ENCODE measurements at regions of chr9 and their contacts with region 1.

Region 1: DNA sequence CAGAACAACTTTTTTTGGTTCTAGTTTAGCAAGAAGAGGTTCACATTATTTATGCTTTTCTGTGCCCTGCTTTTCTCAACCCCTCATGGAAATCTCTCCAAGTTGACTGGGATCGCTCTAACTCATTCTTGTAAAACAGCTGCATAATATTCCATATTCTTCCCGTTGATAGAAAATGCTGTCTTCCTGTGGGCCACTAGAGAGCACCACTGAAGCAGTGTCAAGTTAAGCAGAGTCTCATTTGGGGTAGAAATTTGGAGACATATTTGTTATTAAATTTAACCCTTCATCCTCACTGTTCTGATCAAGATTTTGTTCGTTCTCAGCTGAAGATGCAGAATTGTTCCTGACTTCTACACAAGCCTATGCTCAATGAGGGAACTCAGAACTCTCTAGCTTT is 140.1 kb downstream of the CEMIP2 start:
- DNase-seq: peak in 1 of 4 experiments; percentile 45
- ATAC-seq: peak; percentile 84
- H3K4me3 ChIP-seq: no peak overlapping the region
- H3K27ac ChIP-seq: no peak overlapping the region
- H3K4me1 ChIP-seq: peaks cover 0 to 27% of the 10 kb centered on the region in 2 experiments; a peak in 3 of 5 replicates
- H3K27me3 ChIP-seq: no peaks in the 10 kb centered on the region
- CTCF ChIP-seq: peak; percentile 61 to 67 (median 63)
- EP300 ChIP-seq: no peak
- POLR2A ChIP-seq: no peak
- RAD21 ChIP-seq: peak; percentile 73 to 86

Region 2: GRCh38 chr9:71562140-71562539 is 66.1 kb before region 1 on chr9:
- CTCF ChIA-PET with region 1: no interaction called
- POLR2A ChIA-PET with region 1: no interaction called
- in situ Hi-C with region 1: no loop called
- intact Hi-C with region 1: no loop called
- DNase-seq: no peak
- ATAC-seq: no peak
- H3K4me3 ChIP-seq: no peak overlapping the region
- H3K27ac ChIP-seq: no peak overlapping the region
- H3K4me1 ChIP-seq: no peaks in the 10 kb centered on the region
- H3K27me3 ChIP-seq: peaks cover 0 to 4% of the 10 kb centered on the region in 2 experiments; a peak in 1 of 5 replicates
- CTCF ChIP-seq: no peak
- EP300 ChIP-seq: no peak
- POLR2A ChIP-seq: no peak
- RAD21 ChIP-seq: no peak

Region 3: DNA sequence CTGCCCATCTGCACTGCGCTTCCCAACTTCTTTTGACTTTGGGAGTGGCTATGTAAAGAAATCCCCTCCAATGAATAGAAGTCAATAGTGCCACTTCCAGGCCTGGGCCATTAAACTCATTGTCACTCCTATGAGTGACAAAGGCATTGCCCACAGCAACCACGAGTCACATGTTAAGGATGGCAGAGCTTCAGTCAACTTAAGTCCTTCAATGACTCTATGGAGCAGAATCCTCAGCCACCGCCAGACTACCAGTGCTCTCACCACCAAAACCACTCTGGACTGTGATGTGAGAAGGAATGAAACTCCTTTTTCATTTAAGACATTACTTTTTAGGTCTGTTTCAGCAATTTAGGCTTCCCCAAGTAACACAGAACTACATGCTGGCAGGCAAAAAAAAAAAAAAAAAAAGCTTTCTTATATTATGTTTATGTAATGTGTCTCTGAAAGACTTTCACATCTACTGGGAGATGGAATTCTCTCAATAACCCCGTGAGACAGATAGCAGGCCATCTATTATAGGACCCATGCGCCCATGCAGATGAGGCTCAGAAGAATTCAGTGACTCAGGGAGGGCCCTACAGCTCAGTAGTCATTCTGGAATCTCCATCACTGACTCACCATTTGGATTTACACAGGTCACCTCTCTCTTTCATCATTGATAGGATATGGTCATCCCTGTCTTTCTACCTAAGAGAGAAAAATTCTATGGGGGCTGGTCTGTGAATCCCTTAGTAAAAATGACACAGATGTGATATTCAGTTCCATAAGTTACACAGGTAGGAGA is 40.5 kb before region 1 on chr9:
- CTCF ChIA-PET with region 1: no interaction called
- POLR2A ChIA-PET with region 1: no interaction called
- in situ Hi-C with region 1: no loop called
- intact Hi-C with region 1: no loop called
- DNase-seq: no peak
- ATAC-seq: no peak
- H3K4me3 ChIP-seq: no peak overlapping the region
- H3K27ac ChIP-seq: no peak overlapping the region
- H3K4me1 ChIP-seq: no peaks in the 10 kb centered on the region
- H3K27me3 ChIP-seq: 0 out of 5 replicates have a peak, but pooled peaks cover 0 to 5% of the 10 kb centered on the region in 2 experiments
- CTCF ChIP-seq: no peak
- EP300 ChIP-seq: no peak
- POLR2A ChIP-seq: no peak
- RAD21 ChIP-seq: no peak

Region 4: DNA sequence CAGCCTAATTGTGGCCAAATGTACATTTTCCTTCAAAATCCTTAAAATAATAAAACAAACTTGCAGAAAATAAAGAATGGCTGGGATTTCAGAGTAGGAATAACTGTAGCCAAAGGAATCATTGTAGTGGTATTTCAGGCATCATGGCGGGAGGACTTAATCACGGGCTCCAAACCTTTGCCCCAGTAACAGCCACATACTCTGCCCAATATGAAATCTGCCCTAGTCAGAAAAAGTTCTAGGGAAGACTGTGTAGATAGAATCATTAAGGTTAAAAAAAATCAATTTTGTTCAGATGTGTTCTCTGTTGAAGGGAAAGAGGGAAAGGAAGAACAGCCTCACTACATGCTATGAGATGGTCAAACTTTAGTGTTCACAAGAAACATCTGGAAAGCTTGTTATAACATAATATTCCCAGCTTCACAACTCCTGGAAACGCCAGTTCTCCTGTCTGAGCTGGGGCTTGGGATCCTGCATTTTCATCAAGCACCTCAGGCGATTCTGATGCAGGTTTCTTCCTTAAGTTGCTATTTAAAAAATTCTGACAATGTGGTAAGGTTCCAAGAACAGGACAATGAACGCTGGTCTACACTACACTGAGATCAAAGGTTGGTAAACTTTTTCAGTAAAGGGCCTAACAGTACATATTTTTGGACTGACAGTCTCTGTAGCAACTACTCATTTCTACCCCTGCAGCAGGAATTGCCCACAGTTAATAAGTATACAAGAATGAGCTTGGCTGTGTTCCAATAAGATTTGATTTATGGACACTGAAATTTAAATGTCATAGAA is 52.1 kb after region 1 on chr9:
- CTCF ChIA-PET with region 1: no interaction called
- POLR2A ChIA-PET with region 1: no interaction called
- in situ Hi-C with region 1: no loop called
- intact Hi-C with region 1: loop called (anchors 2 kb)
- DNase-seq: no peak
- ATAC-seq: no peak
- H3K4me3 ChIP-seq: no peak overlapping the region
- H3K27ac ChIP-seq: no peak overlapping the region
- H3K4me1 ChIP-seq: peaks cover 7 to 23% of the 10 kb centered on the region in 2 experiments; a peak in 4 of 5 replicates
- H3K27me3 ChIP-seq: no peaks in the 10 kb centered on the region
- CTCF ChIP-seq: no peak
- EP300 ChIP-seq: no peak
- POLR2A ChIP-seq: no peak
- RAD21 ChIP-seq: no peak

Region 5: GRCh38 chr9:71716138-71716909 is 88.1 kb after region 1 on chr9:
- CTCF ChIA-PET with region 1: no interaction called
- POLR2A ChIA-PET with region 1: no interaction called
- in situ Hi-C with region 1: no loop called
- intact Hi-C with region 1: loop called (anchors 5 kb)
- DNase-seq: no peak
- ATAC-seq: no peak
- H3K4me3 ChIP-seq: no peak overlapping the region
- H3K27ac ChIP-seq: no peak overlapping the region
- H3K4me1 ChIP-seq: no peaks in the 10 kb centered on the region
- H3K27me3 ChIP-seq: no peaks in the 10 kb centered on the region
- CTCF ChIP-seq: peak in 1 of 3 experiments; percentile 40; a peak in 3 of 6 replicates
- EP300 ChIP-seq: no peak
- POLR2A ChIP-seq: no peak
- RAD21 ChIP-seq: peak; percentile 14 to 19; a peak in 2 of 4 replicates

Region 6: GRCh38 chr9:71762900-71763653 is 134.8 kb after region 1 on chr9:
- CTCF ChIA-PET with region 1: no interaction called
- POLR2A ChIA-PET with region 1: no interaction called
- in situ Hi-C with region 1: no loop called
- intact Hi-C with region 1: loop called (anchors 1 kb)
- DNase-seq: no peak
- ATAC-seq: no peak
- H3K4me3 ChIP-seq: no peak overlapping the region
- H3K27ac ChIP-seq: no peak overlapping the region
- H3K4me1 ChIP-seq: peaks cover 0 to 29% of the 10 kb centered on the region in 2 experiments; a peak in 4 of 5 replicates
- H3K27me3 ChIP-seq: no peaks in the 10 kb centered on the region
- CTCF ChIP-seq: no peak
- EP300 ChIP-seq: no peak
- POLR2A ChIP-seq: no peak
- RAD21 ChIP-seq: no peak

Measured in K562 (cell line).